Activated CD4-positive, alpha-beta memory T cell treated with anti-CD3 and anti-CD28 coated beads for 36 hours (primary cell): ENCODE measurements at regions of chr2 and their contacts with region 1.

Region 1: GRCh38 chr2:191150600-191151330 is at the start of gene STAT4:
- DNase-seq: peak; percentile 93
- H3K4me3 Mint-ChIP-seq: peak within 1 kb of the TSS; percentile 96
- H3K27ac Mint-ChIP-seq: peak within 1 kb of the TSS; percentile 95
- H3K4me1 Mint-ChIP-seq: peaks cover 64% of the 10 kb centered on the region
- H3K27me3 Mint-ChIP-seq: no peaks in the 10 kb centered on the region
- total RNA-seq, gene STAT4: 52.4 to 52.6 TPM

Region 2: DNA sequence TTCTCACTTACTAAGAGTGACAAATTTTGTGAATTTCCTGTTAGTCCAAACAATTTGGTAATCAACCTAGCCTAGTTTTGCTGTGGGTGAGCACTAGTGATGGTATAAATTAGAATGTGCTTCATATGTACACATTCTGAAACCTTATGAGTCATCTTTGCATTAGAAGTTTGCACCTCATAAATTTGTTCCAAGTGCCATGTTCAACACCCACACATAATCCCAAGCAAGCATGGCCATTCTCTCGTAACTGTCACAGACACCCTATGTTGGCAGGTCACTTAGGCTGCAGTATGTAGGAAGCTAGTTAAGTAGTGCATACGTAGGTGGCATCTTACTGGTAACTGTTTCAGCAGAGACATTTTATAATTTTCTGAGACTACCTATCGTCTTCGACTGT is 455.0 kb before region 1 on chr2:
- CTCF ChIA-PET with region 1: no interaction called
- POLR2A ChIA-PET with region 1: no interaction called
- intact Hi-C with region 1: no loop called
- DNase-seq: peak; percentile 61
- H3K4me3 Mint-ChIP-seq: no peak overlapping the region
- H3K27ac Mint-ChIP-seq: peak overlapping the region; percentile 44
- H3K4me1 Mint-ChIP-seq: peaks cover 42% of the 10 kb centered on the region
- H3K27me3 Mint-ChIP-seq: no peaks in the 10 kb centered on the region

Region 3: DNA sequence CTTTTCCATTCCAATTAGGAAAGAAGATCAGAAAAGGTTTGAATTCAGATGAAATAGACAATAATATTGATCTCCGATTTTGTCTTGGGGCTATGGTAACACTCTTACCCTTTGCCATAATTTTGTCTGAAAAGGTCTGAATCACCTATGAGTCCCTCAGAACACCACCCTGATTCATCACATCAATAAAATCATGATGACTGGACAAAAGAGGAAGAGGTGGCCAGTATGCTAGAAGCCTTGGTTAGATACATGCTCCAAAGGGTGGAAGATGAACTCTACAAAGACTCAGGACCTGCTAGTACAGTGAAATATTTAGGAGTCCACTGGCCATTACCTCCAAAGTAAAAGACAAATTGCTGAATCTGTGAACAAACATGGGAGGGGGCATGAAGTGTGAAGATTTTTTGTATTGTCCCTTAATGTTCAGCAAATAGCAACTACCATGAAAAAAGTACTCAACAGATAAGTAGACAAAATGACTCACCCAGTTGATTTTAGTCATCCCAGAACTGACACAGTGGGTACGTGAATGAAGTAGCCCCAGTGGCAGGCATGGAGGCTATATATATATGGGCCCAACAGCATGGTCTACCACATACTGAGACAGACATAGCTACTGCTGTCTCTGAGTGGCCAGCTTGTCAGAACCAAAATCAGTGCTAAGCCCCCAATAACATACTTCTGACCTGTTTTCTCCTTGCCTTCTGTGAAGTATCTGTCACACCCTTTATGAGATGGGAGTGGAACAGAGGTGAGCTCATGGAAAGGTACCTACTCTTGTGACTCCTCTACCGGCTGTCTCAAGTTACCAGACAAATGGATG is 306.7 kb before region 1 on chr2:
- CTCF ChIA-PET with region 1: no interaction called
- POLR2A ChIA-PET with region 1: no interaction called
- intact Hi-C with region 1: loop called (anchors 2 kb)
- DNase-seq: peak; percentile 78
- H3K4me3 Mint-ChIP-seq: peak overlapping the region; percentile 30
- H3K27ac Mint-ChIP-seq: peak overlapping the region; percentile 92
- H3K4me1 Mint-ChIP-seq: peaks cover 39% of the 10 kb centered on the region
- H3K27me3 Mint-ChIP-seq: peaks cover 1% of the 10 kb centered on the region

Region 4: GRCh38 chr2:191038241-191038725 is 112.5 kb before region 1 on chr2:
- CTCF ChIA-PET with region 1: interaction called, 18 read pairs
- POLR2A ChIA-PET with region 1: interaction called, 4 read pairs
- intact Hi-C with region 1: no loop called
- DNase-seq: peak; percentile 63
- H3K4me3 Mint-ChIP-seq: no peak overlapping the region
- H3K27ac Mint-ChIP-seq: peak overlapping the region; percentile 68
- H3K4me1 Mint-ChIP-seq: peaks cover 48% of the 10 kb centered on the region
- H3K27me3 Mint-ChIP-seq: no peaks in the 10 kb centered on the region

Region 5: DNA sequence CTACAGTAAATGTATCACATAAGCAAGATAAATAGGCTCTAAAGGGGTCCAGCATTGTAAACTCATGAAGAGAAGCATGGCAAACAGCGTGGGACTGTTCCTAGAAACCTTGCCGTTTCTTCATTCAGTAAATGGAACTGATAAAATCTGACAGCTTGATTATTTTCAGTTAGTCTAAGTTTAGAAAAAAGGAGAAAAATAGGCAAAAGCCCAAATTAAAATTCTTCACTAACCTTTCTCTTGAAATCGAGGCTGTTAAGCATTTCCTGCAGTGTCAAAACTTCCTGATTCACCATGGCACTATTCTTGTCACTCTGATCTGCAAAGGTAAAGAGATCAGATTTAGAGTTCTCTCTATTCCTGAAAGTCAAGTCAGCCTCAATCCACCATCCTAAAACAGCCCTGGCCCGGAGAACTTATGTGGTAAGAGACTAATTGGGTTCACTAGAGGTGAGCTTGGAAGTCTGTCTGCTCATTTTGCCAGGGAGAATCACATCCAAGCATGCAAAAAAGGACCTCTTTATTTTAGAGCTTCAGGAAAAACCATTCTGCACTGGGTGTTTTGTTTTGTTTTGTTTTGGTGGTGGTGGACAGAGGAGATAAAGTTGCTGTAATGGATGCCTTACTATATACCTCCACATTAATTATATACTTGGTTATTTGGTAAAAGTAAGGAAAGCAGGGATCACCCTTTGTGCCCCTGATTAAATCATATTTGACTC is 84.4 kb before region 1 on chr2:
- CTCF ChIA-PET with region 1: interaction called, 27 read pairs
- POLR2A ChIA-PET with region 1: interaction called, 11 read pairs
- intact Hi-C with region 1: no loop called
- DNase-seq: peak; percentile 26
- H3K4me3 Mint-ChIP-seq: peak overlapping the region; percentile 63
- H3K27ac Mint-ChIP-seq: peak overlapping the region; percentile 85
- H3K4me1 Mint-ChIP-seq: peaks cover 79% of the 10 kb centered on the region
- H3K27me3 Mint-ChIP-seq: no peaks in the 10 kb centered on the region

Region 6: DNA sequence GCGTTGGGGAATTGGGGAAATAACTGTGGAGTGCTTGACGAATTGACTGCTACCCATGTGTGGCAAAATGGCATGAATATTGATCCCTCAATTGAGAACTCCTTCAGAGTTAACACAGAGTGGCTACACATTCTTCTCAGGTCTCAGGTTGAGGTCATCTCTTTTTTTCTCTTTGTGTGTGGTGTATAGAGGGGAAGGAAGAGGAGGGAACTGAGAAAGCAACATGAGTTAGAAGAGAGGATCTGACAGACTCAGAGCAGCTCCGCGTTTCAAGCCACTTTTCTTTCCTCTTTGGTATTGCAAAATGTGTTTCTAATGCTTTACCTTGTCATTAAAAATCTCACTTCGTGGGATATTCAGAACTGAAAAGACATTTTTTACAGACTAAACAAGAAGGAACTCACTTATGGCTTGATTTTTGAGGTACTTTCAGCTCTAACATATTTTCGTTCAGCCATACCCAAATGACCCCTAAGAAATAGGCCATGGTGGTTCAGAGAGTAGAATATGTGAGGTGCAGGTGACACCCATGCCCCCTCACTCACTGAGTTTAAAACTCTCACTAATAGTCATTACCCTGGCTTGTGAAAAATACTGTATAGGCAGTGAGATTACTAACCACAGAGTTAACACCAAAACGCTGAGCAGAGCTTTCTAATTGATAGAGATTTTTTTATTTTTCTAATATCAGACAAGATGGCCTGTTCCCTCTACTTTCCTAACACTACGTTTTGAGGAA is 22.4 kb before region 1 on chr2:
- CTCF ChIA-PET with region 1: interaction called, 9 read pairs
- POLR2A ChIA-PET with region 1: interaction called, 6 read pairs
- intact Hi-C with region 1: loop called (anchors 1 kb)
- DNase-seq: no peak
- H3K4me3 Mint-ChIP-seq: peak overlapping the region; percentile 52
- H3K27ac Mint-ChIP-seq: peak overlapping the region; percentile 28
- H3K4me1 Mint-ChIP-seq: peaks cover 70% of the 10 kb centered on the region
- H3K27me3 Mint-ChIP-seq: no peaks in the 10 kb centered on the region

Region 7: DNA sequence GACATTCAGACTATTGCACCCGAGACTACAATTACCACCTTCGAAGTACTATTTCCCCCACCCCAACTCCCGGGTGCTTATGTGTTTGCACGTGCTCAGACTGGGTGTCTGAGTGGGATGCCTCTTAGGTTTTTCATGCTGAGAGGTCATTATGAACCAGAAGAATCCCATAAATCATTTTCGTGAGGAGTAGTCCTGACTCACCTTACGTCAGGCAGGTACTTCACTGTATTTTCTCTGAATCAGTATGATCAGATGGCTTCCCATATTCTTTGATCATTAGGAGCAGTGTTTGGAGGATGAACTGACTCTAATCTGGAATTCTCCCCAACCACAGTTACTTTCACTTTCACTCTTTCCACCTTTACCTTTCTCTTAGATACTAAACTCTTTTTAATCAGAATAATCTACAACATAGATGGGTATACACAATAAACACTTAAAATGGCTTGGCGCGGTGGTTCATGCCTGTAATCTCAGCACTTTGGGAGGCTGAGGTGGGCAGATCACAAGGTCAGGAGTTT is 38.4 kb after region 1 on chr2:
- CTCF ChIA-PET with region 1: interaction called, 5 read pairs
- POLR2A ChIA-PET with region 1: interaction called, 4 read pairs
- intact Hi-C with region 1: loop called (anchors 1 kb)
- DNase-seq: no peak
- H3K4me3 Mint-ChIP-seq: peak overlapping the region; percentile 27
- H3K27ac Mint-ChIP-seq: peak overlapping the region; percentile 10
- H3K4me1 Mint-ChIP-seq: peaks cover 58% of the 10 kb centered on the region
- H3K27me3 Mint-ChIP-seq: no peaks in the 10 kb centered on the region